OCI-LY7 (cell line): ENCODE measurements at regions of chr5 and their contacts with region 1.

Region 1: GRCh38 chr5:131521252-131521651 is 113.8 kb downstream of the RAPGEF6 start:
- DNase-seq: no peak
- H3K4me3 ChIP-seq: no peak overlapping the region
- H3K27ac ChIP-seq: no peak overlapping the region
- H3K4me1 ChIP-seq: no peaks in the 10 kb centered on the region
- CTCF ChIP-seq: no peak

Region 2: GRCh38 chr5:131533836-131534235 is 12.6 kb after region 1 on chr5:
- CTCF ChIA-PET with region 1: no interaction called
- POLR2A ChIA-PET with region 1: interaction called, 10 read pairs
- intact Hi-C with region 1: no loop called
- DNase-seq: no peak
- H3K4me3 ChIP-seq: no peak overlapping the region
- H3K27ac ChIP-seq: no peak overlapping the region
- H3K4me1 ChIP-seq: peaks cover 18% of the 10 kb centered on the region
- CTCF ChIP-seq: 0 out of 2 replicates have a peak, but pooled peaks have one; percentile 38

Region 3: DNA sequence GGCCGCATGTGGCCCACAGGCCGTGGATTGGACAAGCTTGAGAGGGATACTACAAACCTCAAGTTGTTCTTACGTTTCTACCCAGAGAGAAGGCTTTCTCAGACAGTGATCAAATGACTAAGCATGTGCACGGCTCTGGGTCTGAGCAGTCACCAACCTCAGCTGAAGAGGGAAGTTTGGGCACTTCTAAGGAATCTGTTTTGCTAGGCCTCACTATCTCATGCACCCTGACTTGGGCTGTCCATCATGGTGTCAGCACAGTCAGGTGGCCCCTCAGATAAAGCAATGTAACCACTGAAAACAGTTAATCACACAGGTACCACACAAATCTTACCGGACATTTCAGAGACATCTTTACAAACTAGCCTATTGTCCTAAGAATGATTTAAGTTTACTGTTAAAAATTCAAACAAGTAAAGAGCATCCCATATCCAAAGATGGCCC is 576.9 kb after region 1 on chr5:
- CTCF ChIA-PET with region 1: no interaction called
- POLR2A ChIA-PET with region 1: interaction called, 12 read pairs
- intact Hi-C with region 1: no loop called
- DNase-seq: no peak
- H3K4me3 ChIP-seq: no peak overlapping the region
- H3K27ac ChIP-seq: no peak overlapping the region
- H3K4me1 ChIP-seq: peaks cover 43% of the 10 kb centered on the region
- CTCF ChIP-seq: no peak